ENCODE measurements at regions of chr17 and their contacts with region 1.

Region 1: GRCh38 chr17:77957857-77958715 is at the start of gene TNRC6C:
- DNase-seq: peak; percentile 100
- H3K4me3 Mint-ChIP-seq: peak within 1 kb of the TSS; percentile 83
- H3K27ac Mint-ChIP-seq: peak within 1 kb of the TSS; percentile 61
- H3K4me1 Mint-ChIP-seq: peaks cover 31% of the 10 kb centered on the region
- H3K27me3 Mint-ChIP-seq: peaks cover 46% of the 10 kb centered on the region
- total RNA-seq, gene TNRC6C: 25.5 to 26.7 TPM

Region 2: DNA sequence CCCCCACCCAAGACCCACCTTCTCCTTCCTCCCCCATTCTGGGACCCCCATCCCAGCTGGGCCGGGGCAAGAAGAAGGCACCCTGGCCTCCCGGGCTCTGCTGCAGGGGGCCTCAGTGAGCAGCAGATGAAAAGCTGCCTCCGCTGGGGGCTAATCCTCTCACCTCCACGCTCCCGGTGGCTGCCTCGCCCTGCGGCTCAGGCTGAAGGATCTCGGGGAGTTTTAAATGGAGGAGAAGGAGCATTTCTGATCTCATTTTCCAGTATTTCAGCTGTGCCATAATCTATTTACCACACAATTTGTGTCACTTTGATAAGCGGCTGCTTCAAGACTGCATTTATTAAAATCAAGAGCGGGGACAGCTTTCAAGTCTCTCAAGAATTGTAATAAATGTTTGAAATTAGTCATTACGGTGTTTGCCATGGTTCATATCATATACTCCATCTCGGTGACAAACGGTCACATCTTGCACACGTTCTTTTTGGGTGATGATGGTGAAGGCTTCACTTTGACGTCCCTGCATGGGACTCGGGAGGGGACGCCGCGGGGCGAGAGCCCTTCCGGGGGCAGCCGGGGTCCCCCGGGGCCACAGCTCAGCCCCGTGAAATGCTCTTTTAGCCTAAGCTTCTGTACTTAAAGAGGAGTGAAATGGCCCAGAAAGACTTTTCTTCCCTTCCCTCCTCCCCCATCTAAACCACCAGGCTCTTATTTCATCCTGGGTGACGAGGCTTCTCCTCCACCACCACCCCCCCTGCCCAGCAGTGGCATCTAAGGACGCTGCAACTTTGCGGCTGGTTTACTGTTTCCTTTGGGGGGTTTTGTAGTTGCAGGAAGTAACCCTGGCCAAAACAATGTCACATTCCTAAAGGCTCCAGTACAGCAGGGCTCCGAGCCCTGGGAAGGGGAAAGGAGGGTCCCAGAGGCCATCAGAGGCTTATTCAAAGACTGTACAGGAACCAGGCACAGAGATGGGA is 312.7 kb before region 1 on chr17:
- CTCF ChIA-PET with region 1: no interaction called
- POLR2A ChIA-PET with region 1: interaction called, 14 read pairs
- DNase-seq: peak; percentile 72
- H3K4me3 Mint-ChIP-seq: peak overlapping the region; percentile 58
- H3K27ac Mint-ChIP-seq: peak overlapping the region; percentile 89
- H3K4me1 Mint-ChIP-seq: peaks cover 43% of the 10 kb centered on the region
- H3K27me3 Mint-ChIP-seq: peaks cover 10% of the 10 kb centered on the region

Region 3: GRCh38 chr17:77813648-77814047 is 144.4 kb before region 1 on chr17:
- CTCF ChIA-PET with region 1: no interaction called
- POLR2A ChIA-PET with region 1: no interaction called
- DNase-seq: no peak
- H3K4me3 Mint-ChIP-seq: no peak overlapping the region
- H3K27ac Mint-ChIP-seq: no peak overlapping the region
- H3K4me1 Mint-ChIP-seq: no peaks in the 10 kb centered on the region
- H3K27me3 Mint-ChIP-seq: peaks cover 5% of the 10 kb centered on the region

Region 4: GRCh38 chr17:77842528-77843147 is 115.4 kb before region 1 on chr17:
- CTCF ChIA-PET with region 1: interaction called, 7 read pairs
- POLR2A ChIA-PET with region 1: interaction called, 30 read pairs
- DNase-seq: no peak
- H3K4me3 Mint-ChIP-seq: no peak overlapping the region
- H3K27ac Mint-ChIP-seq: peak overlapping the region; percentile 28
- H3K4me1 Mint-ChIP-seq: peaks cover 43% of the 10 kb centered on the region
- H3K27me3 Mint-ChIP-seq: peaks cover 12% of the 10 kb centered on the region

Region 5: DNA sequence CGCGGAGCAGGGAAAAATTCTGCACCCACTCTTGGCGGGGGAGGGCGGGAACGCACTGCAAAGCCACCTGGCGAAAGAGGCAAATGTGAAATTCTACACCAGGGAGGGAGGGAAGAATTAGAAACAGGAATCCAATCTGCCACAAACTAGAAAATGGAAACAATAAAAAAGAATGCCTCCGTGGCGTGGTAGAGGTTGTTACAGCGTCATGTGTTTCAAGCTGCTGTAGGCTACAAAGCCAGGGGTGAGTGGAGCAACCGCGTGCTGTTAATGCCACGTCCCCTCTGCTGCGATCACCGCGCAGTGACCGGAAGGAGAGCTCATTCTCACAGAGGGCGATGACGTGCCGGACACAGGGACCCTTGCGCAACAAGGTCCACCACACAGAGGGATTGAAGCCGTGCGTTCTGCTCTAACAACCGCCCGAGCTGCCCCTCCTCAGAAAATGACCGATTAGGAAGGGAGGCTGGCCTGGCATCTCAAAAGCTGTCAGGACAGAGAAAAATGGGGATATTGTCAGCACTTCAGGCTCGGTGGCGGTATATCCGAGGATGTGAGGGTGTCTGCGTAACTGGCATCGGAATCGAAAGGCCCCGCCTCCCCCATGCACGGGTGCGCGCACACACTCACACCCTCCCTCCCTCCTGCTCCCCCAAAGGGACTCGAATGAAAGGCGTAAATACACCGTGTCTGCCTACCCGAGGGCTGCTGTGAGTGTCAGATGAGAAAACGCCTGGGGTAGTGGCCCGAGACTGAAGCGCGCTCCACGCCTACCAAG is 70.4 kb before region 1 on chr17:
- CTCF ChIA-PET with region 1: no interaction called
- POLR2A ChIA-PET with region 1: interaction called, 47 read pairs
- DNase-seq: peak; percentile 63
- H3K4me3 Mint-ChIP-seq: peak overlapping the region; percentile 73
- H3K27ac Mint-ChIP-seq: peak overlapping the region; percentile 13
- H3K4me1 Mint-ChIP-seq: peaks cover 43% of the 10 kb centered on the region
- H3K27me3 Mint-ChIP-seq: peaks cover 46% of the 10 kb centered on the region

Region 6: DNA sequence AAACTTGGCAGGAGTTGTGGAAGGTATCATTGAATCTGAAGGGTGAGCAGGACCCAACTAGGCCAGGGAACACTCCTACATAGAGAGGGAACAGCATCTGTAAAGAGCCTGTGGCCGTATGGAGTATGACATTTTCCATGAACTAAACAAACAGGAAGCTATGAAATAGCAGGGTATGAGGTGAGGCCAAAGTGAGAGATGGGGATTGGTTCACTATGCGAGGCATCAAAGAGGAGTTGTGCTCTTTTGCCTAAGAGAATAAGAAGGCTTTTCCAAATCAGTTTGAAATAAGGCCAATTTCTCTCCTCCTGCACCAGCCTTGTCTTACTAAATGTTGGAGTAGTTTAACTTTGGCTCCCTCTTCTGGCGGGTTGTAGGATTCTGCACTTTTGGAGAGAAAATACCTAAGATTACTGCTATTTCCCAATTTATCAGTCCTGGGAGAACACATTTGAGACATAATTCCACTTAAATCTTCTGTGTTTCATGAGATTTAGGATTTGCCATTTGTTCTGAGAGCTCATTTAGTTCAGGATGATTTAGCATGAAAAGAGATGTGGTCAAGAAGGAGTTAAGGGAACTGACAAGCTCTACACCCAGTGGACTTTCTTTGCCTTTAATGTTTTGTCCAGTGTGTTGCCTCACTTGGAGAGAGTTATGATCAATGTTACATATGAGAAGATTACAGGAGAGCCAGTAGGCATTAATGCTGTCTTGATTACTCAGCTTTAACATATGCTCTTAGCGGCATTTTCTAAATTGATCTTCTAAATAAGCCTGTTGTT is 55.8 kb after region 1 on chr17:
- CTCF ChIA-PET with region 1: interaction called, 10 read pairs
- POLR2A ChIA-PET with region 1: interaction called, 26 read pairs
- DNase-seq: peak; percentile 56
- H3K4me3 Mint-ChIP-seq: no peak overlapping the region
- H3K27ac Mint-ChIP-seq: no peak overlapping the region
- H3K4me1 Mint-ChIP-seq: peaks cover 9% of the 10 kb centered on the region
- H3K27me3 Mint-ChIP-seq: no peaks in the 10 kb centered on the region